ENCODE measurements at regions of chr15 and their contacts with region 1.

Region 1: GRCh38 chr15:60840306-60840702 is 361.4 kb upstream of the ICE2 start:
- DNase-seq: peak in 1 of 5 donors; percentile 64
- H3K4me3 ChIP-seq: peak overlapping the region; percentile 48 to 60
- H3K4me3 Mint-ChIP-seq: peak overlapping the region; percentile 86 to 93 (median 91)
- H3K27ac ChIP-seq: peak overlapping the region; percentile 66
- H3K27ac Mint-ChIP-seq: peak overlapping the region; percentile 90 to 99 (median 96)
- H3K4me1 ChIP-seq: peaks cover 93% of the 10 kb centered on the region
- H3K4me1 Mint-ChIP-seq: peaks cover 68 to 98% (median 85%) of the 10 kb centered on the region in 4 donors
- H3K27me3 ChIP-seq: no peaks in the 10 kb centered on the region
- H3K27me3 Mint-ChIP-seq: no peaks in the 10 kb centered on the region

Region 2: DNA sequence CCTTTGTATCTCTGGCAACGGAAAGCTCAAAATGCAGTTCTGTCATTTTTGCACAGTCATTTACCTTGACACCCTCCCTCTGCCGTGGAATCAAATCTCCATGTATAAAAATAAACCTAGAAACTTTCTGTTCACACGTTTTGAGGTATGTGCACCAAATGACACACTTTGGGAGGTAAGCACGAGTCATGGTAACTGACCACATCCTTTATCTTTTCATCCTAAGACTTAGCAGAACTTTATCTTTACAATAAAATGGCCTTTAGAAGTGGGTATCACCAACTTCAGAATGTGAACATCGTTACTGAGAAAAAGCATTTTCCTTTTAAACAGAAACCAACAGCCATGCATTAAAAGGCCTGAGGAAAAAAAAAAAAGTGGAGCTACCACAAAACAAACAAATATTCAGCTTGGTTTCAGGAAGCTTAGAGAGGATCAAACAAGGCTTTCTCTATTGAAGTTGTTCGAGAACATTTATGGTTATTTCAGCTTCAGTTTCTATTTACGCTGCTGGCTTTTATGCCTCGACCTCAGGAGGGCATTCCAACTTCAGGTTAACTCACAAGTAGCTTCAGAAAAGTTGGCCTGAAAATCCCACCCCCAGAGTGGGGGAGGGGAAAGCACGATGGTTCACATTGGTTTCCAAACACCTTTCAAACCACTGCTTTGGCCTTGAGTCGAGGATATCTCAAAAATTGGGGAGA is 190.3 kb before region 1 on chr15:
- CTCF ChIA-PET with region 1: interaction called, 5 read pairs
- POLR2A ChIA-PET with region 1: interaction called, 28 read pairs
- intact Hi-C with region 1: no loop called
- DNase-seq: peak; percentile 73 to 85 (median 81)
- H3K4me3 ChIP-seq: peak overlapping the region in 1 of 2 donors; percentile 46
- H3K4me3 Mint-ChIP-seq: peak overlapping the region; percentile 67 to 92 (median 85)
- H3K27ac ChIP-seq: peak overlapping the region; percentile 66
- H3K27ac Mint-ChIP-seq: peak overlapping the region; percentile 93 to 99 (median 97)
- H3K4me1 ChIP-seq: peaks cover 46% of the 10 kb centered on the region
- H3K4me1 Mint-ChIP-seq: peaks cover 36 to 55% (median 47%) of the 10 kb centered on the region in 4 donors
- H3K27me3 ChIP-seq: no peaks in the 10 kb centered on the region
- H3K27me3 Mint-ChIP-seq: no peaks in the 10 kb centered on the region

Region 3: DNA sequence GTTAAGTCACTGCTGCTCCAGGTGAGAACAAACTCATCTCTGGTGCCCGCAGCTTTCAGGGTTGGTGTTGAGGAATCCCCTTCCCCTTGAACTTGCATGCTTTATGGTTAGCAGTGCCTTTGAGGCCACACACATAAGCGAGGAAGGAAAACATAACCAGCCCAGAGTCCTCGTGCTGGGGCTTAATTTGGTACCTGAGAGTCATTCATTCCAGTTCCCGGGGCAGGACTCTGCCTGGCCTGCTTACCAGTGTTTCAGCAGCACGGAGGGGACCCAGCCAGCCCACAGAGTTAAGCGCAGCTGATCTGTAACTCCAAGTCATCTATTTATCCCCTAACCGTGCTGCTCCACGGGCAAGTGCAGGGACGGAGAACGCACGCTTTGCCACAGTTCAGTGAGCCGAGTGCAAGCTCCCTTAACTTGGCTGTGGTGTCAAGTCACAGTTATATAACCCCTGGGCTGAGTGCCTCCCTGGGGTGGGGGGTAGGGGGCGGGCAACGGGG is 59.0 kb before region 1 on chr15:
- CTCF ChIA-PET with region 1: interaction called, 29 read pairs
- POLR2A ChIA-PET with region 1: interaction called, 11 read pairs
- intact Hi-C with region 1: no loop called
- DNase-seq: peak in 1 of 5 donors; percentile 14
- H3K4me3 ChIP-seq: no peak overlapping the region
- H3K4me3 Mint-ChIP-seq: peak overlapping the region in 6 of 8 donors; percentile 9 to 73 (median 36)
- H3K27ac ChIP-seq: peak overlapping the region; percentile 14
- H3K27ac Mint-ChIP-seq: peak overlapping the region in 5 of 7 donors; percentile 8 to 91 (median 68)
- H3K4me1 ChIP-seq: peaks cover 45% of the 10 kb centered on the region
- H3K4me1 Mint-ChIP-seq: peaks cover 25 to 48% (median 45%) of the 10 kb centered on the region in 4 donors
- H3K27me3 ChIP-seq: no peaks in the 10 kb centered on the region
- H3K27me3 Mint-ChIP-seq: no peaks in the 10 kb centered on the region

Region 4: GRCh38 chr15:60804986-60805949 is 35.0 kb before region 1 on chr15:
- CTCF ChIA-PET with region 1: interaction called, 4 read pairs
- POLR2A ChIA-PET with region 1: interaction called, 151 read pairs
- intact Hi-C with region 1: loop called (anchors 1 kb)
- DNase-seq: no peak
- H3K4me3 ChIP-seq: no peak overlapping the region
- H3K4me3 Mint-ChIP-seq: peak overlapping the region in 7 of 8 donors; percentile 26 to 77 (median 69)
- H3K27ac ChIP-seq: peak overlapping the region; percentile 29
- H3K27ac Mint-ChIP-seq: peak overlapping the region; percentile 71 to 94 (median 91)
- H3K4me1 ChIP-seq: peaks cover 95% of the 10 kb centered on the region
- H3K4me1 Mint-ChIP-seq: peaks cover 68 to 96% (median 84%) of the 10 kb centered on the region in 4 donors
- H3K27me3 ChIP-seq: no peaks in the 10 kb centered on the region
- H3K27me3 Mint-ChIP-seq: no peaks in the 10 kb centered on the region

Region 5: DNA sequence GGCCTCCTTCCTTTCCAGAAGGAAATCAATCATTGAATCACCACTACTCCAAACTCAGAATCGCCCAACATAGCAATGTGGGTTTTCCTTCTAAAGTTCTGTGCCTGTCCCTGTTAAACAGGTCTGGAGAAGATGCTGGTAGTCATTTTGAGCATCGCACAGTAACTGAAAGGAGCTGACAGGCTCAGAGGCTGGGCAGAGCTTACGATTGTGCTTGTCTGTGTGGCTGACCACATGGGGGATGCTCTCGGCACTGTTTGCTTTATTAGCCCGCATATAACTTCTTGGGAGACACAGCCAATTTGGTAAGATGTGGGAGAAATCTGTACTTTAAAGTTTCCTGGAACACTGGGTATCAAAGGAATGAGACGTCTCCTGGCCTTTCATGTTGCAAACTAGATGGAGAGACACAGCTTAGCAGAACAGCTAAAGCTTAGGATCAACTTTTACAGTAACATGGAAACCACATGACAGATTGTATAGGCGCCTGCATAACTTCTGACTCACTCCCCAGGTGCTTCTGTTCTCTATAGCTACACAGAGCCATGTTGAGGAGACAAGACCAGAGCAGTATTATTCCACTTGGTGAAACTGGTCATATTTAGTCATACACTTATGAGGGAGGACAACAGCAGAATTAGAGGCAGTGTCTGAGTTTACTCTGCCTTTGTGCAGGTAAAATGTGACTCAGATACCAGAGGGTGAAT is 14.7 kb after region 1 on chr15:
- CTCF ChIA-PET with region 1: interaction called, 65 read pairs
- POLR2A ChIA-PET with region 1: interaction called, 28 read pairs
- intact Hi-C with region 1: no loop called
- DNase-seq: no peak
- H3K4me3 ChIP-seq: no peak overlapping the region
- H3K4me3 Mint-ChIP-seq: peak overlapping the region in 1 of 8 donors; percentile 3
- H3K27ac ChIP-seq: no peak overlapping the region
- H3K27ac Mint-ChIP-seq: peak overlapping the region in 1 of 7 donors; percentile 47
- H3K4me1 ChIP-seq: peaks cover 4% of the 10 kb centered on the region
- H3K4me1 Mint-ChIP-seq: peaks cover 19 to 32% (median 28%) of the 10 kb centered on the region in 4 donors
- H3K27me3 ChIP-seq: no peaks in the 10 kb centered on the region
- H3K27me3 Mint-ChIP-seq: no peaks in the 10 kb centered on the region

Region 6: DNA sequence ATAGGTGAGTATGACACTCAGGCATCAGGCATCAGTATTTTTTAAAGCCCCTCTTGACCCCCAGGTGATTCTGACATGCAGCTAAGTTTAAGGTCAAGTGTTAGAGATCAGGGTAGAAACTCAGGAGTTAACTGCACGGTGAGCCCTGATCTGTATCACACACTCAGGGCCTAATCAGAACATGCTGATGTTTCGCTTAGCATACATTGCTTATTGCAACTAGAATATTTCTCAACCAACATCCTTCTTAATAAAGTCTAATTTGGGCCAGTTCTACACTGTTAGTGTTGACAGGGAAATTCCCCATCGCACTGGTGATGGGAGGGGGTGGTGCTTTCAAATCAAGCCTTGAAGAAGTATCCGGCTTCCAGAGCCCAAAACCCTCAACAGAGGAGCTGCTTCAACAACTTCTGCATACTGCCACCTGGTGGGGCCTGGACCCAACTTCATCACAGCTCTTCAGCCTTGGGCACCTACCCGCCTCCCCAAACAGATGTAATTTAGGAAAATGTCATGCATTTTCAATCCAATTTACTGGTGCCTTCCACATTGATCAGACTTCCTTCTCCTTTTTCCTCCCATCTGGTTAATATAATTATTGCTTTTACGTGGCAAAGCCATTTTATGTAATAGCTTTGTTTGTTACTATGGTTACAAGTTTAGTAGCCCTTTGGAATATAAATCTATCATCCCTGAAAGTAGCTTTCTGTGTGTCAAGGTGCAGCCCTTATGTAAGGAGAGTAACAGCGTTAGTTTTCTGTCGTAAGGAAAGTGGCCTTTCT is 76.6 kb after region 1 on chr15:
- CTCF ChIA-PET with region 1: interaction called, 11 read pairs
- POLR2A ChIA-PET with region 1: no interaction called
- intact Hi-C with region 1: loop called (anchors 2 kb)
- DNase-seq: peak; percentile 85 to 95 (median 88)
- H3K4me3 ChIP-seq: no peak overlapping the region
- H3K4me3 Mint-ChIP-seq: peak overlapping the region in 5 of 8 donors; percentile 18 to 72 (median 57)
- H3K27ac ChIP-seq: peak overlapping the region; percentile 55
- H3K27ac Mint-ChIP-seq: peak overlapping the region; percentile 82 to 98 (median 94)
- H3K4me1 ChIP-seq: peaks cover 12% of the 10 kb centered on the region
- H3K4me1 Mint-ChIP-seq: peaks cover 7 to 17% (median 10%) of the 10 kb centered on the region in 4 donors
- H3K27me3 ChIP-seq: no peaks in the 10 kb centered on the region
- H3K27me3 Mint-ChIP-seq: no peaks in the 10 kb centered on the region

Measured in CD4-positive, alpha-beta memory T cell (primary cell).